H1 (cell line): ENCODE measurements at regions of chr7 and their contacts with region 1.

Region 1: DNA sequence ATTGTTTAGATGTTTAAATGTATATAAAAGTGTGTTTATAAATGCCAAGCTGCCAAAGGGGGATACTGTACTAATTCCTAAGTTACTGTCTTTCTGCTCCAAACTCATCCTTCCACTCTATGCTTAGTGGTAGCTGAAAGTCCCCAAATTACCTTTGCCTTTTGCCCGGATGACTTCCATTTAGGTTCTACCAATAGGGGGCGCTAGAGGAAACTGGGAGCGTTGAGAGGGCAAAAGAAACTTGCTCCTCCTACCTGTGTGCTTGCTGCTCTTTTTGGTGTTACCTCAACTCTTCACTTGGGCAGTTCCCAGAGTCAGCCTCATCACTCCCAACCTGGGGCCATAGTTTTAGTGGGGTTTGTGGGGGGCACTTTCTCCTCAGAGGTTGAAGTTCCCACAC is 5.9 kb upstream of the OR2A25 start:
- DNase-seq: peak in 1 of 2 experiments; percentile 53
- H3K4me3 ChIP-seq: no peak overlapping the region
- H3K27ac ChIP-seq: no peak overlapping the region
- H3K4me1 ChIP-seq: no peaks in the 10 kb centered on the region
- H3K27me3 ChIP-seq: no peaks in the 10 kb centered on the region
- CTCF ChIP-seq: peak; percentile 5 to 74 (median 62)
- EP300 ChIP-seq: no peak
- POLR2A ChIP-seq: no peak
- RAD21 ChIP-seq: peak; percentile 30 to 57

Region 2: DNA sequence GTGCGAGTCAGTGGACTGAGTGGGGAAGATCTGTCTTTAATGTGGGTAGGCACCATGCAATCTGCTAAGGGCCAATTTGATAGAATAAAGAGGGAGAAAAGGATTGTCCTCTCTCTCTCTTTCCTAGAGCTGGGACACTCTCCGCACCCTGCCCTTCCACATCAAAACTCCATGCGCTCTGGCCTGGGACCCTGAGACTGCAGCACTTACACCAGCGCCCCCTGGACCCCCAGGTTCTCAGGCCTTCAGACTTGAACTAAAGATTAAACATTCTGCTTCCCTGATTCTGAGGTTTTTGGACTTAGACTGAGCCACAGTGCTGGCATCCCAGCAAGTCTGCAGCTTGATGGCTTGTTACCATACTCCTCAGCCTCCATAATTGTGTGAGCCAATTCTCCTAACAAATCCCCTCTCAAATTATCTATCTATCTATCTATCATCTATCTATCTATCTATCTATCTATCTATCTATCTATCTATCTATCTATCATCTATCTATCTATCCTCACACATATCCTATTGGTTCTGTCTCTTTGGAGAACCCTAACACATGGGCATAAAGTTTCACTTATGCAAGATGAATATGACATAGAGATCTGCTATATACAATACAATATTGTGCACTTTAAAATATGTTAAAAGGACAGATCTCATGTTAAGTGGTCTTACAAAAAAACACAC is 37.4 kb before region 1 on chr7:
- CTCF ChIA-PET with region 1: no interaction called
- POLR2A ChIA-PET with region 1: no interaction called
- DNase-seq: no peak
- H3K4me3 ChIP-seq: no peak overlapping the region
- H3K27ac ChIP-seq: no peak overlapping the region
- H3K4me1 ChIP-seq: no peaks in the 10 kb centered on the region; a peak in 1 of 7 replicates
- H3K27me3 ChIP-seq: no peaks in the 10 kb centered on the region
- CTCF ChIP-seq: peak in 2 of 3 experiments; percentile 7 to 16; a peak in 2 of 4 replicates
- EP300 ChIP-seq: no peak
- POLR2A ChIP-seq: no peak
- RAD21 ChIP-seq: peak; percentile 27 to 34

Region 3: GRCh38 chr7:144074373-144074772 is 10.7 kb after region 1 on chr7:
- CTCF ChIA-PET with region 1: interaction called, 13 read pairs
- POLR2A ChIA-PET with region 1: no interaction called
- DNase-seq: no peak
- H3K4me3 ChIP-seq: no peak overlapping the region
- H3K27ac ChIP-seq: no peak overlapping the region
- H3K4me1 ChIP-seq: no peaks in the 10 kb centered on the region
- H3K27me3 ChIP-seq: no peaks in the 10 kb centered on the region
- CTCF ChIP-seq: peak in 1 of 3 experiments; percentile 25; a peak in 1 of 4 replicates
- EP300 ChIP-seq: no peak
- POLR2A ChIP-seq: no peak
- RAD21 ChIP-seq: no peak